GM18951 (cell line): ENCODE measurements at regions of chr10 and their contacts with region 1.

Region 1: GRCh38 chr10:79195091-79195923 is 126.5 kb downstream of the ZMIZ1 start:
- POLR2A ChIP-seq: no peak

Region 2: DNA sequence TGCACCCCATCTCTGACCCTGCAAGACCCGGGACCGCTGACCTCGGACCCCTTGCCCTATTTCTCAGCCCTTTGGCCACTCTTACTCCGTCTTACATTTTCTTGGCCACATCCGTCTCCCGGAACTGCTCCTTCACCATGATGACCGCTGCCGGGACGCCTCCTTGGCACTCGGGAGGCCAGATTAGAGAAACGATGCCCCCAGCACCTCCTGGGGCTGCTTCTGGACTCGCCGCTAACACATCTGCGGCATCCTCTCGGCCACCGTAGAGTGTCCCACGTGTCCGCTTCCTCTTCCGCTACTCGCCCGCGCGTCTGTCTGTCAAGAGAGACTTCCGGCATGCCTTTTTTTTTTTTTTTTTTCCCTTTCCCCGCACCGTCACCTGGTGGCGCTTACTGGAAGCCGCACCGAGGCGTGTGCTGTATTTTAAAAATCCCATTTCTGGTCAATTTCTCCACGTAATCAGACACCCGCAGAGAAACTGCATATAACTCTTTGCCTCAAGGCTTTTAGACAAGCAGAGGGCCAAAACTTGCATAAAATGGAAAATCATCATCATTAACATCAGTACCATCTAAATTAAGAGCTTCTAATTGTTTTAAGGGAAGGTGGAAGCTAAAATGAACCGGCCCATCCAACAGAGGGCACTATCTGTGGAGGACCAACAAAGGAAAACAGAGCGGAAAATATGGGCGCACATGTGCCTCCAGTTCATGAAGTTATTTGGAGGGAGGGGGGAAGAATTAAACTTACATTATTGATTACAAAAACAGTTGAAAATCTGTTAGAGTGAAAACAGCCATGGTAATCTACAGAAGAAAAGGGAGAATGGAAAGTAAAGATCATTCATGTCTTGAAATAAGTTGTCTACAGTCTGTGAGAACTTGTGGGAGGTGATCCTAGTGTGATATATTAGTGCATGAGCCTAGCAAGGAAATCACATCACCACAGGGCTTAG is 1165.8 kb before region 1 on chr10 and contains the start of gene POLR3A:
- in situ Hi-C with region 1: loop called (anchors 25 kb)
- POLR2A ChIP-seq: peak; percentile 87

Region 3: GRCh38 chr10:78712147-78712546 is 483.2 kb before region 1 on chr10:
- in situ Hi-C with region 1: no loop called
- POLR2A ChIP-seq: no peak

Region 4: DNA sequence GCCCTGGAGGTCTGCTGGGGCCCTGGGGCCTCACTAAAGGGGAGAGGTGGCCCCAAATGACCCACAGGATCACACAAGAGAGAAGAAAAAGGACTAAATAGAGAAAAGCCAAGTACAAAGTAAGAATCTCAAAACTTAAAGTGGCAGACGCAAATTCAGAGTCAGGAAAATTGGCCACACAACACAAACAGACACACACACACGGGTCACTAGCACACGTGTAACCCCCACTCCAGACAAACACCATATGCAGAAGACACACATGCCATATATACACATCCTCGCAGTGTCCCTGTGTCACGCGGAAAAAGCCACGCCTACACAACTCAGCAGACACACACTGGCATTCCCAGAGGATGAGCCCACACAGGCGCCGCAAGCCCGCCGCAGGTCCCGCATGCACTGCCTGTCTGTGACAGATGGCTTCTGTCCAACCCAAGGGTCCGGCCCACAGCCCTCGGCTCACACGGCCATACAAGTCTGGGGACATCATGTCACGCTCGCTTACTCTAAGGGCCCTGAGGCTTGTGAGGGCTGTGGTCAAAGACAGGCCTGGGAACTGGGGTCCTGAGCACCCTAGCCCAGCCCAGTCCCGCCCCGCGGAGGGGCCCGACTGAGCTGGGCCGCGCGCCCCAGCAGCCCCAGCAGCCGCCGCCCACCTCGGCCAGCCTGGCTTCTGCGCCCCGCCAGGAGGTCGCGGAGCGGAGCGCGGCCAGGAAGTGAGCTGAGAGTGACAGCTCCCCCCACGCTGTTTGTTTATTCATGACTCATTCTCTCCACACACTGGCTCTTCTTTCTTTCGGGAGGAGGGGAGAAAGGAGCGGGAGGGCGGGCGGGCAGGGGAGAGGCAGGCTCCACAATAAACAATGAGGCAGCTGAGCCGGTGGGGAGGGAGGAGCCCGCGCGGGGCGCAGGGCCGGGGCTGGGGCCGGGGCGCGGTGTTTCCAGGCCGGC is 222.1 kb before region 1 on chr10:
- in situ Hi-C with region 1: loop called (anchors 25 kb)
- POLR2A ChIP-seq: no peak

Region 5: DNA sequence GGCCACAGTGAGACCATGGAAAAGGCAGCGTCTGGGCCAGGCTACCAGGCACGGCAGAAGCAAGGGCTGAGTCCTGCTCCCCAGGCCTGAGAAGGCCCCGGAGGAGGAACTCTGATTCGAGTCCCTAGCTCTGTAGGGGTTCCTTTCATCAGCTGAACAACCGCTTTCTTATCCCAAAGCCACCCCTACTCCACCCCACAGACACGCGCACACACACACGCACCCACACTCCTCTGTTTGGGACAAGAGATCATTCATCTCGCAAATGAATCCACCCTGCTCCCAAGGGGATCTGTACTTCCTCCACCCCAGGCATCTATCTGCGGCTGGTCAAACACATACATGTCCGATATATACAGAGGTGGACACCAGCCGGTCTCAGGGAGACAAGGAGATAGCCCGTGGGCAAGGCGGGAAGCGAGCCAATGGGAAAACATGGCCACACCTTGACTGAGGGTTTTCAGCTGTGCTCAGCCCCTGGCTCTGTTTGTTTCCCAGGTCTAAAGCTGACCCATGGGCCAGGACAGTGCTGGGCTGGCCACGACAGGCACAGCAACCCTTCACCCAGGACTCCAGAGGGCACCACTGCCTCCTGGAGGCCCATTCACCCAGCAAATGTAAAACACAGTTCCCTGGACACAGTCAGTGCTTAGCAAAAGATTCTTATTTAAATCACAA is 242.9 kb after region 1 on chr10:
- in situ Hi-C with region 1: no loop called
- POLR2A ChIP-seq: no peak